GM12878 (cell line): ENCODE measurements at regions of chr16 and their contacts with region 1.

Region 1: DNA sequence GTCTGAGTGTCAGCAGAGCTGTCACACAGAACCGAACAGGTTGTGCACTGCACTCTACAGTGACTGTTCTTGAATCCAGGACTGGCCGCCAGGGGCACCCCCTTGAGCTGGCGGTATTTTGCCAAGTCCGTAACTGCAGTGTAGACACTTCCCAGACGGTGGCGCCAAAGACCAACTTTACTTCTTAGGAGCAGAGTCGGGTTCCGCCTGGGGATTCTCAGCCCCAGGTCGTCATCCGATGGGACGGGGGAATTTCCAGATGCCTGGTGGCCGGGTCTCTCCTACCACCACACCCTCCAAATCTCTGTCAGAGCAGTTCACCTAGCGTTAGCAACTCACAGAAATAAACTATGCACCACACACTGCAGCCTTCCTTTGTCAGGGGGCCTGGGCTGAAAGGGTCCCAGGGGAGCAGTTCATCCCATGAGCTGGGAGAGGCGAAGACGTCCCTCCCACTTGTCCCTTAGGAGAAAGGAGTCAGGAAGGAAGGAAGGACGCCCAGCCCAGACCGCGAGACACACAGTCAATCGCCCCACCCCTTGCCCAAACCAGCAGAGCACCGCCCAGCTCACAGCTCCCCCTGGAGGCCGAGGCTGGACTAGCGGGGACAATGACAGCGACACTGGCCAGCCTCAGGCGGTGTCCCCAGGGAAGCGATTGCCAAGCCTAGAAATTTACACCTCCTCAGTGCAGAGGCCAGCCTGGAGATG is 7.4 kb upstream of the RIPOR1 start:
- DNase-seq: peak; percentile 87
- ATAC-seq: peak; percentile 86
- H3K4me3 ChIP-seq: peak overlapping the region; percentile 70; the same call in 1 of the 2 replicates
- H3K27ac ChIP-seq: peak overlapping the region; percentile 98
- H3K4me1 ChIP-seq: peaks cover 27% of the 10 kb centered on the region
- H3K27me3 ChIP-seq: no peaks in the 10 kb centered on the region
- CTCF ChIP-seq: peak; percentile 91 to 100 (median 99); a peak in 5 of 6 replicates
- EP300 ChIP-seq: no peak
- POLR2A ChIP-seq: peak; percentile 56
- RAD21 ChIP-seq: peak; percentile 83

Region 2: GRCh38 chr16:67345401-67345800 is 175.8 kb before region 1 on chr16:
- CTCF ChIA-PET with region 1: no interaction called
- POLR2A ChIA-PET with region 1: no interaction called
- RAD21 ChIA-PET with region 1: no interaction called
- SMC1A ChIA-PET with region 1: no interaction called
- in situ Hi-C with region 1: no loop called
- intact Hi-C with region 1: no loop called
- DNase-seq: no peak
- ATAC-seq: no peak
- H3K4me3 ChIP-seq: no peak overlapping the region
- H3K27ac ChIP-seq: no peak overlapping the region
- H3K4me1 ChIP-seq: no peaks in the 10 kb centered on the region
- H3K27me3 ChIP-seq: no peaks in the 10 kb centered on the region
- CTCF ChIP-seq: no peak
- EP300 ChIP-seq: no peak
- POLR2A ChIP-seq: no peak
- RAD21 ChIP-seq: no peak

Region 3: GRCh38 chr16:67490335-67491096 is 30.7 kb before region 1 on chr16:
- CTCF ChIA-PET with region 1: interaction called, 453 read pairs
- POLR2A ChIA-PET with region 1: interaction called, 42 read pairs
- RAD21 ChIA-PET with region 1: interaction called, 172 read pairs
- SMC1A ChIA-PET with region 1: interaction called, 92 read pairs
- in situ Hi-C with region 1: no loop called
- intact Hi-C with region 1: no loop called
- DNase-seq: no peak
- ATAC-seq: no peak
- H3K4me3 ChIP-seq: no peak overlapping the region
- H3K27ac ChIP-seq: no peak overlapping the region
- H3K4me1 ChIP-seq: peaks cover 12% of the 10 kb centered on the region
- H3K27me3 ChIP-seq: no peaks in the 10 kb centered on the region
- CTCF ChIP-seq: no peak
- EP300 ChIP-seq: no peak
- POLR2A ChIP-seq: no peak
- RAD21 ChIP-seq: no peak

Region 4: DNA sequence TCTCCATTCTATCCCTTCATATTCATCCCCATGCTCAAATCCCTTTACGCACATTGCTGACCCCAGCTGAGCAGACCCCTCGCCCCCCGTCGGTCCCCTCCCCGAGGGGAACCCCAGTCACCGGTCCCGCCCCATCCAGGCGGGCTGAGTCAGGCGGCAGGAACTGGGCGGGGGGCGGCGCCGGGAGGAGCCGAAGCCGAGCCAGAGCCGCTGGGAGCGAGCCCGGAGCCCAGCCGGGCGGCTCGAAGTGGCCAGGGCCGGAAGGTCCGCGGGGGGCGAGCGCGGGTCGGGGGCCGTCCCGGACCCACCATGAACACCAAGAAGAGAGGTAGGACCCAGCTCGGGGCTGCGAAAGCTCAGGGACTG is 16.0 kb after region 1 on chr16:
- CTCF ChIA-PET with region 1: interaction called, 131 read pairs
- POLR2A ChIA-PET with region 1: interaction called, 56 read pairs
- RAD21 ChIA-PET with region 1: interaction called, 17 read pairs
- SMC1A ChIA-PET with region 1: interaction called, 27 read pairs
- in situ Hi-C with region 1: no loop called
- intact Hi-C with region 1: no loop called
- DNase-seq: no peak
- ATAC-seq: peak; percentile 61
- H3K4me3 ChIP-seq: peak overlapping the region; percentile 83
- H3K27ac ChIP-seq: peak overlapping the region; percentile 50
- H3K4me1 ChIP-seq: peaks cover 7% of the 10 kb centered on the region
- H3K27me3 ChIP-seq: peaks cover 0 to 2% of the 10 kb centered on the region in 2 experiments; a peak in 1 of 4 replicates
- CTCF ChIP-seq: no peak
- EP300 ChIP-seq: no peak
- POLR2A ChIP-seq: peak; percentile 67
- RAD21 ChIP-seq: no peak

Region 5: DNA sequence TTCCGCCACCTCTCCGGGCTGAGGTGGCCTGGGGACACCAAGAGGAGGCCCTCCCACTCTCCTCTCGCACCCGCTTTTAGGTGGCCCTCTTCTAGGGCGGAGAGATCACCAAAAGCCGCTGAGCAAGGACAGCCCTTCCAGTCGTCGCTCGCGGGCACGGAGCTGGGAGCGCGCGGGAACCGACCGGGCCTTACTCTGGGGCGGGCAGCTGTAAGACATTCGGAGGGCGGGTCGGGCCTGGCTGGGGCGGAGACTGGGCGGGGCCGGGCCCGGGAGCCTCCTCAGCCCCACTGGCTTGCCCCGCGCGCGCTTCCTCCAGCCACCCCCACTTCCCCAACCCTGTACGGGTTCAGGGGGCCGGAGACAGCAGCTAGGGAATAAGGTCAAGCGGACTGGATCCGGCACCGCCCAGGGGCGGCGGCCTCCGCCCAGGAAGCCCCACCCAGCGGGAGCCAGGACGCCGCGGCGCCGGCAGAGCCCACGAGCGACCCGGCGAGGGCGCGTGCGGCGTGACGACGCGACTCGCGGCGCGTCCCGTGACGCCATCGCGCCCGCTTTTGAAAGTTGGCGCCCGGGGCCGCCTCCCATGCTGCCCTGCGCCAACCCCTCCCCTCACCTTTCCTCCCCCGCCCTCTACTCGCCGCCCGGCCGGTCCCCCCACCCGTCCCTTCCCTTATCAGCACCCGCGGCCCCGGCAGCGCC is 40.7 kb after region 1 on chr16:
- CTCF ChIA-PET with region 1: interaction called, 49 read pairs
- POLR2A ChIA-PET with region 1: interaction called, 4 read pairs
- RAD21 ChIA-PET with region 1: interaction called, 18 read pairs
- SMC1A ChIA-PET with region 1: interaction called, 14 read pairs
- in situ Hi-C with region 1: no loop called
- intact Hi-C with region 1: loop called (anchors 1 kb)
- DNase-seq: peak; percentile 89
- ATAC-seq: peak; percentile 91
- H3K4me3 ChIP-seq: peak overlapping the region; percentile 74
- H3K27ac ChIP-seq: peak overlapping the region; percentile 87
- H3K4me1 ChIP-seq: peaks cover 15% of the 10 kb centered on the region
- H3K27me3 ChIP-seq: no peaks in the 10 kb centered on the region
- CTCF ChIP-seq: no peak
- EP300 ChIP-seq: 0 out of 4 replicates have a peak, but pooled peaks of 1 of the 2 experiments have one; percentile 10
- POLR2A ChIP-seq: peak; percentile 83
- RAD21 ChIP-seq: no peak

Region 6: DNA sequence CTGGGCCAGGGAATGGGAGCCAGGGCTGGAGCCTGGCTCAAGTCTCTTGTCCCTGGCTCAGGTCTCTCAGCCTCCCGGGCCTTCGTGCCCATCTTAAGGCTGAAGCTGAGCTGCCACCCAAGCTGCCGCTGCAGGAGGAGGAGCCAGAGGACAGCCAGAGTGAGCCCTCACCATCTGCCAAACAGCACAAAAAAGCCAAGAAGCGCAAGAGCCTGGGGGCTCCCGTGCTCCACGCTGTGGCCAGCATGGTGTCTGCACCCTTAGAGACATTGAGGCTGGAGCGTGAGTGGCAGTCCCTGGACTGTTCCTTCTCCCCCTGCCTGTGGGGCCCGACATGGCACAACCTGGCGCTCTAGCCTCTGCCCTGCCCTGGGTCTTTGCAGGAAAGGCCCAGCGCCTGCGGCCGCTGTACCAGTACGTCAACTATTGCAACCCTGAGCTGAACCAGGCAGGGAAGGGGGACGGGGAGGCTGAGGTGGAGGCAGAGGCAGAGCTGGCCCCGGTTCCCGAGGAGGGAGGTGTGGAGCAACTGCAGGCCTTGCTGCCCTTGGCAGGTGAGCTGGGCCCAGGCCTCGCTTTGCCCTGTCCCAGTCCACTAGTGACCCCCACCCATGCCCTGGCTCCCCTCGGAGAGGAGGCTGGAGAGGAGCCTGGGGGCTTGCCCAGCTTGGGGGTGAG is 146.7 kb after region 1 on chr16:
- CTCF ChIA-PET with region 1: interaction called, 196 read pairs
- POLR2A ChIA-PET with region 1: interaction called, 5 read pairs
- RAD21 ChIA-PET with region 1: interaction called, 27 read pairs
- SMC1A ChIA-PET with region 1: interaction called, 20 read pairs
- in situ Hi-C with region 1: no loop called
- intact Hi-C with region 1: loop called (anchors 1 kb)
- DNase-seq: peak; percentile 70
- ATAC-seq: peak; percentile 88
- H3K4me3 ChIP-seq: no peak overlapping the region
- H3K27ac ChIP-seq: no peak overlapping the region
- H3K4me1 ChIP-seq: peaks cover 34% of the 10 kb centered on the region
- H3K27me3 ChIP-seq: no peaks in the 10 kb centered on the region
- CTCF ChIP-seq: peak; percentile 91 to 94 (median 92)
- EP300 ChIP-seq: no peak
- POLR2A ChIP-seq: no peak
- RAD21 ChIP-seq: peak; percentile 67

Region 7: DNA sequence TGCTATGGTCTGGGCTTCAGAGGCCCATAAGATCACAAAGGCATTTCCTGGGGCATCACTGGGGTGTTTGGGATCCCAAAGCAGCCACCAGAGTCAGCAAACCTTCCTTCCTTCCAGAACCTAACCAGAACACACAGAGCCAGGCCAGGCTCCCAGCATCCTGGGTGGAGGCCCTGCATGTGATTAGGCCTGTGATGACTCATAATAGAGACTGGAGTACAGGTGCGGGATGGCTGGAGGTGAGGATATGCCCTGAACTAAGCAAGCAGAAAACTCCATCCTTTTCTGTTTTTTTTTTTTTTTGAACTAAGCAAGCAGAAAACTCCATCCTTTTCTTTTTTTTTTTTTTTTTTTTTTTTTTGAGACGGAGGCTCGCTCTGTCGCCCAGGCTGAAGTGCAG is 215.6 kb after region 1 on chr16:
- CTCF ChIA-PET with region 1: no interaction called
- POLR2A ChIA-PET with region 1: no interaction called
- RAD21 ChIA-PET with region 1: no interaction called
- SMC1A ChIA-PET with region 1: no interaction called
- in situ Hi-C with region 1: no loop called
- intact Hi-C with region 1: no loop called
- DNase-seq: no peak
- ATAC-seq: no peak
- H3K4me3 ChIP-seq: no peak overlapping the region
- H3K27ac ChIP-seq: no peak overlapping the region
- H3K4me1 ChIP-seq: no peaks in the 10 kb centered on the region
- H3K27me3 ChIP-seq: no peaks in the 10 kb centered on the region
- CTCF ChIP-seq: no peak
- EP300 ChIP-seq: no peak
- POLR2A ChIP-seq: no peak
- RAD21 ChIP-seq: no peak

Region 8: DNA sequence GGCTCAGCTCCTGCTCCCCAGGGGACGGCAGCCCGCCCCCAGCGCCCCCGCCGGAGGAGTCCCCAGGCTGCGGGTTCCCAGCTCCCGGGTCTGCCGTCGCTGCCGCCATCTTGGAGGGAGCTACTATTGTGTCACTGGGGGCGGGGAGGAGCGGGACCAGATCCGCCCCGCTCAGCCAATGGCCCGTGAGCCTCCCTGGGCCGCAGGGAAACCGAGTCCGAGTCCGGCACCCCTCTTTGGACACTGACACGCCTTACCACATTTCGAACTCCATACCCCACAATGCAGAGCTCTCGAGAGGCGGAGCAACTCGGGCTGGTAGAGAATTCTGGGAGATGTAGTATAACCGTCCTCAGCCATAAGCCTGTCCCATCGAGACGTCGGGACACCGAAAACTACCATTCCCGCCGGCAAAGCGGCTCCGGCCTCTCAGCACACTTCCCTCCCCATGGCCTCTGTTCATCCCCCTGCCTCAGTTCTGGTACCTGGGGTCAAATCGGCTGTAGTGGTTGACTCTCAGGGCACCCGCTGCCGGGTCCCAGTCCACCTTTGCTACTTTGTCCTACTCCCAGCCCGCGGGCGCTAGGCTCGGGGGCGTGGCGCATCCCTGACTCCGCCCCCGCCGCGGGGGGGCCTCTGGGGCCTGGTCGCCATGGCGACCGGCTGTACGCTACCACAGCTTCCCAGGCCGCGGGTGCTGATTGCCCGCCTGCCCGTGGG is 285.3 kb after region 1 on chr16 and contains the starts of genes RANBP10 and TSNAXIP1:
- CTCF ChIA-PET with region 1: interaction called, 11 read pairs
- POLR2A ChIA-PET with region 1: no interaction called
- RAD21 ChIA-PET with region 1: interaction called, 4 read pairs
- SMC1A ChIA-PET with region 1: interaction called, 3 read pairs
- in situ Hi-C with region 1: no loop called
- intact Hi-C with region 1: no loop called
- DNase-seq: peak; percentile 99
- ATAC-seq: peak; percentile 93
- H3K4me3 ChIP-seq: peak within 1 kb of the TSS; percentile 94
- H3K27ac ChIP-seq: peak within 1 kb of the TSS; percentile 75
- H3K4me1 ChIP-seq: peaks cover 22% of the 10 kb centered on the region
- H3K27me3 ChIP-seq: no peaks in the 10 kb centered on the region
- CTCF ChIP-seq: no peak
- EP300 ChIP-seq: no peak
- POLR2A ChIP-seq: peak; percentile 92
- RAD21 ChIP-seq: no peak
- polyA plus RNA-seq, gene RANBP10: 1.2 to 2.0 TPM
- polyA plus RNA-seq, gene TSNAXIP1: 0.09 TPM in 1 of 2 experiments, not detected in the other